ENCODE measurements at regions of chr13 and their contacts with region 1.

Region 1: DNA sequence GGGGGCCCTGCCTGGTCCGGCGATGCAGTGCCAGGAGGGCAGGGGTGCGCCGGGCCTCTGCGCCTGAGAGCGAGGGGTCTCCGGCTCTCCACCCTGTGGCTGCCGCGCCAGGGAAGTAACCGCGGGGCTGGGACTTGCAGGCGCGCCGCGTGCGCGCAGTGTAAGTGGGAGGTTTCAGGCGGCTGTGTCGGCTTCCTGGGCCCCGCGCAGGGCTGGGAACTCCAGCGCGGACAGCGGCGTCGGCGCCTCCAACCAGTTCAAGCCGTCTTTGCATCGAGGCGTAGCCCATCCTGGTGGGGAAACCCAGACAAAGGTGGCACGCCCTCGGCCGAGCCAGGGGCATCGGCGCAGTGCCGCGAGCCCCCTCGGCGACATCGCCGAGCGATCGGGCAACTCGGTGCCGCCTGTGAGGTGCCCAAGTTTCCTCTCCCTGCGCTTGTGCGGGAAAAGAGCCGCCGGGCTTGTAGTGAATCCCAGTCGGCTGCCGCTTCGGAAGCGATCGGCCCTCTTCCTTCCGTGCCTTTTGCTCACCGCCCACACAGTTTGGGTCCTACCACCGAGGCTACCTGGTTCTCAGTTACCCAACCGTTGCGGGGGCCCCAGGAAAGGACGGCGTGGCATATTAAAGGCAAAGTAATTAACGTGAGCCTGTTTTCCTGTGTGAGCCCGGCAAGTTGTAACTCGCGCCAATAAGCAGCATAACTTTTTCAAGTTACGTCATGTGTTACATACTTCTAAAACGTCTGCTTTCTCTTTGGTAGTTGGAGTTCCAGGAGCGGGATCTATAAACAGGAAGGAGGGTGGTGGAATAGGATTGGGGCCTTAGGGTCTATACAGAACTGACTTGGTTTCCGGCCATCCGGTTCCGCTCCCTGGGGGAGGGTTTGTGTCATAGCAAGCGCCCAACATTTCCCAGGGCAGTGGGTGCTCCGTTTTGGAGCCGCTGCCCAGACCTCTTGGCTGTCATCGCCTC is 1.2 kb downstream of the LRCH1 start:
- DNase-seq: peak; percentile 66
- H3K4me3 Mint-ChIP-seq: peak overlapping the region; percentile 95
- H3K27ac Mint-ChIP-seq: peak overlapping the region; percentile 92
- H3K4me1 Mint-ChIP-seq: peaks cover 53% of the 10 kb centered on the region
- H3K27me3 Mint-ChIP-seq: peaks cover 6% of the 10 kb centered on the region

Region 2: DNA sequence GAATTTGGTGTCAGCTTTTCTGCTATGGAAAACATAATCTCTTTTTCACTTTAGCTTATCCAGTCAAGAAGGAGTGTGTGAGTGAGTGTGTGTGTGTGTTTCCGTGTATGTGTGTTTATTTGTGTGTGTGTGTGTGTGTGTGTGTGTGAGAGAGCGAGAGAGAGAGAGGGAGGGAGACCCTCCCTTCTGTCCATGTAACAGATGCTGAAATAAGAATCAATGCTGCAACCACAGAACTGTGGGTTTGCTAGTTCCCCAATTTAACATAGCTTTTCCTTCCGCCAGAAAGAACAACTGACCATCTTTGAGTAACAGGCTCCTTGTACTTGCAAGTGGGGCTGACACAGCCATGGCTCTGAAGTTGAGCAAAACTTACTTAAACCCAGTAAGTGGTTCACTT is 377.4 kb before region 1 on chr13:
- intact Hi-C with region 1: loop called (anchors 5 kb)
- DNase-seq: no peak
- H3K4me3 Mint-ChIP-seq: peak overlapping the region; percentile 97
- H3K27ac Mint-ChIP-seq: peak overlapping the region; percentile 86
- H3K4me1 Mint-ChIP-seq: peaks cover 73% of the 10 kb centered on the region
- H3K27me3 Mint-ChIP-seq: no peaks in the 10 kb centered on the region

Region 3: DNA sequence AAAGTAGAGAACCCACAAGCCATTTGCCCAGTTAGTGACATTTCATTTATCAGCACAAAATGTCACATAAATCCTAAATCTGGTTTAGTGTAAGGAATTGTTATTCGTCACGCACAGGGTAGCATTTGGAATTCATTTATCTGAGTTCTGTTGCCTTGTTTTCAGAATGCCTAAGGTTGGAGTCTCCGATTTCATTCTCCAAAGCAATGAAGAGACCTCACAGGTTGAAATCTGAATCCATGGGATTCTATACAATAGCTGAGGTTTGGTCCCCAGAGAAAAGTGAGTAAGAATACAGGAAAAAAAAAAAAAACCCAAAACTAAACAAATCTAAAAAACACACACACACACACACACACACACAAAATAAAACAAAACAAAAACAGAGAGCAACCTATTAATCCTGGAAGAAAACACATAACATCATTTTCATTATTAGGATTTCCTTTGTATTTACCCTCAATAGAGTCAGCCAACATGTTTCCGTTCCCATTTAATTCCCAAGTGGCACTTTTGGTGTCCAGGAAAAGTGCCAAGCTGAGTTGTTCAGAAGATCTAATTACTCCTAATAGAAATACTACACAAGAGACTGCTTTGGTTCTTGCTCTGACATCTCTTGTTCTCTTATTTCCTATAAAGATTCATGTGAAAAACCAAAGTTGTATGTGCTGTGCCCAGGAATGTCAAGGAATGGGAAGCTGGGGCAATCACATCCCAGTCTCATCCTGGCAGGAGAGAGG is 37.4 kb before region 1 on chr13:
- intact Hi-C with region 1: no loop called
- DNase-seq: no peak
- H3K4me3 Mint-ChIP-seq: no peak overlapping the region
- H3K27ac Mint-ChIP-seq: no peak overlapping the region
- H3K4me1 Mint-ChIP-seq: no peaks in the 10 kb centered on the region
- H3K27me3 Mint-ChIP-seq: peaks cover 11% of the 10 kb centered on the region

Region 4: GRCh38 chr13:46571189-46571908 is 17.2 kb after region 1 on chr13:
- intact Hi-C with region 1: loop called (anchors 1 kb)
- DNase-seq: no peak
- H3K4me3 Mint-ChIP-seq: no peak overlapping the region
- H3K27ac Mint-ChIP-seq: peak overlapping the region; percentile 35
- H3K4me1 Mint-ChIP-seq: peaks cover 43% of the 10 kb centered on the region
- H3K27me3 Mint-ChIP-seq: no peaks in the 10 kb centered on the region

Region 5: GRCh38 chr13:46598140-46598819 is 44.1 kb after region 1 on chr13:
- intact Hi-C with region 1: loop called (anchors 1 kb)
- DNase-seq: no peak
- H3K4me3 Mint-ChIP-seq: no peak overlapping the region
- H3K27ac Mint-ChIP-seq: no peak overlapping the region
- H3K4me1 Mint-ChIP-seq: peaks cover 86% of the 10 kb centered on the region
- H3K27me3 Mint-ChIP-seq: no peaks in the 10 kb centered on the region

Region 6: GRCh38 chr13:46668302-46668720 is 114.1 kb after region 1 on chr13:
- intact Hi-C with region 1: loop called (anchors 1 kb)
- DNase-seq: peak; percentile 18
- H3K4me3 Mint-ChIP-seq: peak overlapping the region; percentile 79
- H3K27ac Mint-ChIP-seq: peak overlapping the region; percentile 87
- H3K4me1 Mint-ChIP-seq: peaks cover 63% of the 10 kb centered on the region
- H3K27me3 Mint-ChIP-seq: no peaks in the 10 kb centered on the region

Region 7: DNA sequence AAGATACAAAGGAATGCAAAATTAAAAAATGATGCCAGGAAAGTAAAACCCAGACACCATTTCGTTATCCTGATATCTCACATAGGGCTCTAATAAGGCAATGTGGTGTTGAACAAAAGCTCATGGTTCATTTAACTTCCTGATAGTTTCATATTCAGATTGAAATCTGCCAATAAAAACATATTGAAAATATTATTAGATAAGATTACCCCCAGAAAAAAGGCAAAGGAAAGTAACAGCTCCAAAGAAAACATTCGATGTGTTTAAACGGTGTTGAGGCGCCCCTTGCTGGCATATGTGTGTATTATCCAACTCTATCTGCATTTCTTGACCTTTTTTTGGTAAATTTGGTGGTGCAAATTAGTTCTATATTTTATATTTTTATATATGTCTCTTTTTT is 166.9 kb after region 1 on chr13:
- intact Hi-C with region 1: loop called (anchors 1 kb)
- DNase-seq: no peak
- H3K4me3 Mint-ChIP-seq: no peak overlapping the region
- H3K27ac Mint-ChIP-seq: no peak overlapping the region
- H3K4me1 Mint-ChIP-seq: peaks cover 12% of the 10 kb centered on the region
- H3K27me3 Mint-ChIP-seq: no peaks in the 10 kb centered on the region

Region 8: GRCh38 chr13:46796515-46797474 is 242.6 kb after region 1 on chr13 and contains the start of gene ESD:
- intact Hi-C with region 1: loop called (anchors 1 kb)
- DNase-seq: peak; percentile 83
- H3K4me3 Mint-ChIP-seq: peak within 1 kb of the TSS; percentile 93
- H3K27ac Mint-ChIP-seq: peak within 1 kb of the TSS; percentile 95
- H3K4me1 Mint-ChIP-seq: peaks cover 36% of the 10 kb centered on the region
- H3K27me3 Mint-ChIP-seq: peaks cover 7% of the 10 kb centered on the region
- total RNA-seq, gene ESD: 96.8 and 102 TPM in 2 replicates

Measured in activated T-helper 1 cell treated with anti-CD3 and anti-CD28 coated beads, Interleukin-12 subunit alpha, Interleukin-12 subunit beta, Interleukin-2, Interleukin-4 antibody, amounts not matched to agents 30 ng/mL and 10 ng/mL and 1 ng/mL, durations not matched to agents 14 hours and 24 hours and 36 hours (primary cell).